ENCODE measurements at regions of chr5 and their contacts with region 1.

Region 1: DNA sequence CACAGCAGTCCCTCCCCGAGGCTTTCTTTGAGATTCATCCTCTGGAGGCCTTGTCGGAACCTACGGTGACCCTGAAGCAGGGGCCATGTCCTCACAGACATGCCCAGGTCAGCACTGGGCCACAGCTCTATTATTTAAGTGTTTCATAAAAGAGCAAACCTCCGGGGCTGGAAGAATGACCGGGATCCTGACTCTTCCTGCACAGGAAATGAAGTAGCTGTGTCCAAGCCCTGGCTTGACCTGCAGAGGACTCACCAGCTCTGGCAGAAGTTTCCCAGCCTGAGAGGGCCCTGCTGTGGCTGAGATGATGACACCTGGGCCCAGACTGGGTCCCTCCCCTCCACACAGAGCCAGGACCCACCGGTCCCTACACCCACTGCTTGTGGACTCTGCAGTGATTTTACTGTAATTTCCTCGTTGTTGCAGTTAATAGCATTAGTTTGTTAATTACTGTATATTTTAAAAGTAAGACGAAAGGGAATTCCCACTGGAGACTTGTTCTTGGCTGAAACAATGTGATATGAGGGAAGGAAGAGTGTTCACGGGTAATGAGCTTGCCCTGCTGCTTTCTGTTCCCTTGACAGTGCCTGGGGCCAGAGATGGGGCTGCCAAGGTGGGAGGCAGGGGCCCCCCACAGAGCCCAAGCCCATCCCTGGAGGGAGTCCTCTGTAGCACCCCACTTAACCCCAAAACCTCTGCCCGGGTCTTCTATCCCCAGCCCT is 72.2 kb downstream of the PCDH1 start:
- DNase-seq: peak in 4 of 5 donors; percentile 62 to 73 (median 68)
- ATAC-seq: peak; percentile 83 to 92 (median 86)
- H3K4me3 ChIP-seq: no peak overlapping the region
- H3K27ac ChIP-seq: peak overlapping the region; percentile 69 to 94 (median 84)
- H3K4me1 ChIP-seq: peaks cover 0 to 54% (median 32%) of the 10 kb centered on the region in 12 donors
- H3K27me3 ChIP-seq: peaks cover 0 to 30% (median 5%) of the 10 kb centered on the region in 9 donors
- CTCF ChIP-seq: peak in 3 of 12 donors; percentile 5 to 28 (median 12)
- POLR2A ChIP-seq: no peak

Region 2: GRCh38 chr5:141762790-141763368 is 43.2 kb before region 1 on chr5:
- intact Hi-C with region 1: loop called in 3 of 10 experiments (anchors 2 to 5 kb)
- DNase-seq: peak in 3 of 5 donors; percentile 10 to 45 (median 42)
- ATAC-seq: peak; percentile 40 to 89 (median 56)
- H3K4me3 ChIP-seq: no peak overlapping the region
- H3K27ac ChIP-seq: no peak overlapping the region
- H3K4me1 ChIP-seq: peaks cover 0 to 29% (median 16%) of the 10 kb centered on the region in 12 donors
- H3K27me3 ChIP-seq: peaks cover 0 to 24% (median 8%) of the 10 kb centered on the region in 9 donors
- CTCF ChIP-seq: peak in 7 of 12 donors; percentile 19 to 46 (median 24)
- POLR2A ChIP-seq: no peak

Region 3: DNA sequence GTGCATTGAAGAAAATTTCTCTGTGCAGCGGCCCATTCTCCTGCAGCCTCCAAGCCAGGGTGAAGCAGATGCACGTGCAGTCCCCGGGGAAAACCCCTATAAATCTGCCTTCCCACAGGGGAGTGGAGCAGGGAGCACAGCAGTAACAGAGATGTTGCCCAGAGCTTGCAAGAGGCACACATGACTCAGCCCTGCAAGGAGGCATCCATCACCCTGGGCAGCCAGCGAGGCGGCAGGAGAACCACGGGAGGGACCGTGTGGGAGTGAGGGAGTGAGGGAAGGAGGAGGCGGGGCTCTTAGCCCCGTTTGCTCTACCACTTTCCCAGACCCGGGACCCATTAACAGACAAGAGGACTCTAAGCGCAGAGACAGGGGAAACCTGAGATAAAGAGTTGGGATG is 27.8 kb before region 1 on chr5:
- intact Hi-C with region 1: no loop called
- DNase-seq: peak in 1 of 5 donors; percentile 44
- ATAC-seq: no peak
- H3K4me3 ChIP-seq: no peak overlapping the region
- H3K27ac ChIP-seq: no peak overlapping the region
- H3K4me1 ChIP-seq: peaks cover 0 to 29% (median 12%) of the 10 kb centered on the region in 12 donors
- H3K27me3 ChIP-seq: peaks cover 0 to 6% (median 0%) of the 10 kb centered on the region in 9 donors
- CTCF ChIP-seq: no peak
- POLR2A ChIP-seq: no peak

Region 4: DNA sequence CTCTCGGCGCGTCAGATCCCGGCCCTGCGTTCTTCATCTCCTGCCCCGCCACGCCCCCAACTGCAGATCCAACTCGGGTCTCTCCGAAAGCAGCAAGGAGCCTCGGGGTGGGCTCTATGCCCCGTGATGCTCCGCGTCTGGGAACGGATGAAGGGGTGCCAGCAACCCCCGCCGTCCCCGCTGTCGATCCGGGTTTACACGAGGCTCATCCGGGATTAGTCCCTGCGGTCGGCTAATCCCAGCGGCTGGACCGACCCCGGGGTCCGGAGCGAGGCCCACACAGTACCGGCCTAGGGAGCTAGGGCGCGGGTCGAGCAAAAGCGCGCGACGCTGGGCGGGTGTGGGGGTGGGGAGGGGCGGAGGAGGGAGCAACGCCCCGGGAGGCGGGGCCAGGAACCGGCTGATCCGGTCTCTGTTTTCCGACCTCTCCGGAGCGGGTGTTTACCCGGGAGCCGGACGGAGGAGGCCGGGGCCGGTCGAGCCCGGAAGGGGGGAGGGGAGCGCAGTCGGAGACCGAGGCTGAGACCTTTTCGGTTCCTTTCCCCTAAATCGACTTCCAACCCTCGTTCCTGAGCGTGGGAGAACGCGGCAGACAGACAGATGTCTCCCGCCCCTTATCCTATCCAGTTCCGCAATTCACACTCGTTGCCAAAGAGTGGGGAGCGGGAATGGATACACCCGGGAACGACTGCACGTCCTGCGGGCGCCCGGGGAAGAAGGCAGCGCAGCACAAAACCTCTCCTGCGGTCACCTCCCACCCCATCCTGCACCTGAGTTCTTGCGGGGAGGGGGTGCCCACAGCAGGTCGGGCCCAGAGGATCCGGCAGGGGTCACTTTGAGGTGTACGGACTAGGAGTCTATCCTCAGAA is 43.6 kb after region 1 on chr5:
- intact Hi-C with region 1: loop called in 4 of 10 experiments (anchors 5 kb)
- DNase-seq: peak; percentile 92 to 93 (median 93)
- ATAC-seq: peak; percentile 86 to 95 (median 91)
- H3K4me3 ChIP-seq: peak overlapping the region; percentile 36 to 94 (median 74)
- H3K27ac ChIP-seq: peak overlapping the region; percentile 76 to 99 (median 96)
- H3K4me1 ChIP-seq: peaks cover 0 to 40% (median 27%) of the 10 kb centered on the region in 12 donors
- H3K27me3 ChIP-seq: no peaks in the 10 kb centered on the region
- CTCF ChIP-seq: peak in 3 of 12 donors; percentile 9 to 23 (median 10)
- POLR2A ChIP-seq: peak in 1 of 2 donors; percentile 82